ENCODE measurements at regions of chr6 and their contacts with region 1.

Region 1: DNA sequence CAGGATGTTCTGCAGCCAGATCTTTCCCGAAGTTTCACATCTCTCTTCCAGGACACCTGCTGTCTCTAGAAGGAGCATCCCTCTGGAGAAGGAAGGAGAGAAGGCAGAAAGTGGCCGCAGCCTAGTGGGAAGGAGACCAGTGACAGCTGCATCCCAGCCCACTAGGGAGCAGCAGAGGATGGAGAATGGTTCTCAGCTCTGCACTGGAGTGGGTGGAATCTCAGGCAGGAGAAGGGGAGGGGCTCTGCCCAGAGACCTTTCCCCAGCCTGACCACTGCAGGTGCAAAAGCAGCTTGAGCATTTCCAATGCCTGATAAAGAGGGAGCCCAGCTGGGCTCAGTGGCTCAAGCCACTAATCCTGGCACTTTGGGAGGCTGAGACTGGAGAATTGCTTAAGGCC is 32.3 kb downstream of the NCR2 start:
- DNase-seq: no peak
- ATAC-seq: peak; percentile 84
- H3K4me3 ChIP-seq: no peak overlapping the region
- H3K27ac ChIP-seq: no peak overlapping the region
- H3K4me1 ChIP-seq: 0 out of 2 replicates have a peak, but pooled peaks cover 5% of the 10 kb centered on the region
- H3K27me3 ChIP-seq: peaks cover 8% of the 10 kb centered on the region
- CTCF ChIP-seq: peak; percentile 79

Region 2: DNA sequence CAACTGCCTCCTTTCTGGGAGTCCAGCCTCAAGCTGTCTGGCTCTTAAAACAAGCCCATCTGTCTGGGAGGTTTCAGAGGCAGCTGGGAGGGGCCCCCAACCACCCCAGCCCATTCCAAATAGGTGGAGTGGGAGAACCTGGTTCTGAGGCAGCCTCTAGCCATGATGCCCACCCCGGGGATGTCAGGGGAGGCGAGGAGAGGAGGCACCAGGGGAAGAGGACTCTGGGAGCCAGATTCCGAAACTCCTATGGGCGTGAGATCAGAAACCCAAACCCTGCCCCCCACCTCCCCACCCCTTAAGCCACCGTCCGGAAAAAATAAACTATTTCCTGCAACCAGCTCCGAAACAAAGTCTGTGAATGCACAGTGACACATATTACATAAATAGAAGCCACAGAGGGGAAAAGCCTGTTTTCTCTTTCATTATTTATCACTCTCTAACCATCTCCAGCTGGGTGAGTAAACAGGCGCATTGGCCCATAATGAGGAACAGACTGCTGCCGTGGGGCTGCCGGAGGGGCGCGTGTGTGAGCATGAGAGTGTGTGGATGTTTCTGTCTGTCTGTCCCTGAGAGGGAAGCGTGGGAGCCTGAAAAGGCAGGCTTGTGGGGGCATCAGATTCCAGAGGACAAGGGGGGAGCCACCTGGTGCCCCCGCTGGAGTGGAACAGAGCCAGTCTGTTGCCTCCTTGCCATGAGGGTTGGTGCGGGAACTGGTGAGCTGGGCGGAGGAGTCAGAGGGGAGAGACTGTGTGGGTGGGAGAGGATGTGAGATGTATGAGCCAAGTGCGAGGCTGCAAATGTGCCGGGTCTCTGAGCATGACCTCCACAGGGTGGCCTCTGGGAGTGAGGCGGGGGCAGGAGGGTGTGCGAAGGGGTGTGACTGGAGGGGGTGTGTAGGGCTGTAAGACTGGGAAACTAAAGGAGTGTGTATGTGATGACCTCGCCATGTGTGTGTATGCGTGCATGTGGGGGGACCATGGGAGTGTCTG is 164.2 kb after region 1 on chr6:
- CTCF ChIA-PET with region 1: no interaction called
- POLR2A ChIA-PET with region 1: no interaction called
- in situ Hi-C with region 1: no loop called
- intact Hi-C with region 1: no loop called
- DNase-seq: no peak
- ATAC-seq: no peak
- H3K4me3 ChIP-seq: no peak overlapping the region
- H3K27ac ChIP-seq: no peak overlapping the region
- H3K4me1 ChIP-seq: peaks cover 3% of the 10 kb centered on the region; the same call in 1 of the 2 replicates
- H3K27me3 ChIP-seq: no peaks in the 10 kb centered on the region; the same call in 1 of the 2 replicates
- CTCF ChIP-seq: no peak

Region 3: GRCh38 chr6:41591859-41592502 is 224.3 kb after region 1 on chr6:
- CTCF ChIA-PET with region 1: interaction called, 4 read pairs
- POLR2A ChIA-PET with region 1: no interaction called
- in situ Hi-C with region 1: no loop called
- intact Hi-C with region 1: loop called (anchors 2 kb)
- DNase-seq: peak; percentile 46
- ATAC-seq: peak; percentile 82
- H3K4me3 ChIP-seq: no peak overlapping the region
- H3K27ac ChIP-seq: no peak overlapping the region
- H3K4me1 ChIP-seq: no peaks in the 10 kb centered on the region
- H3K27me3 ChIP-seq: no peaks in the 10 kb centered on the region
- CTCF ChIP-seq: peak; percentile 95

Region 4: DNA sequence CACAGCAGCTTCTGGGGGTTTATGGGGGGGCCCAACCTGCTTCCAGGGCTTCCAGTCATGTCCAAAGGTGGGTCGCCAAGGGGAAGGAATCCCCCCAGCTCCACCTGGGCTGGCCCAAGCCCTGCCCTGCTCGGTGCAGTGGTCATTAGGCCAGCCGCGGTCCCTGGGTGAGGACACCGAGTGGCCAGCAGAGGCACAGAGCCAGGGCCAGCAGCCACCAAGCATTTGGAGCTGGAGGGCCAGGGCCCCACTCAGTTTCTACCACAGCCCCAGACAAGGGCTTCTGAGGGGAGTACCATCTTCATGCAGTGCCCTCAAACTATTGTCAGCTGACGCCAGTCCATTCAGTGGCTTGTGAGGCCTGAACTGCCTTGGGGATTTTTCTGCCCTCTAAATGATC is 328.1 kb after region 1 on chr6:
- CTCF ChIA-PET with region 1: no interaction called
- POLR2A ChIA-PET with region 1: interaction called, 10 read pairs
- in situ Hi-C with region 1: no loop called
- intact Hi-C with region 1: no loop called
- DNase-seq: no peak
- ATAC-seq: no peak
- H3K4me3 ChIP-seq: no peak overlapping the region
- H3K27ac ChIP-seq: no peak overlapping the region
- H3K4me1 ChIP-seq: no peaks in the 10 kb centered on the region
- H3K27me3 ChIP-seq: no peaks in the 10 kb centered on the region
- CTCF ChIP-seq: no peak